AG04449 (cell line): ENCODE measurements at regions of chr12 and their contacts with region 1.

Region 1: DNA sequence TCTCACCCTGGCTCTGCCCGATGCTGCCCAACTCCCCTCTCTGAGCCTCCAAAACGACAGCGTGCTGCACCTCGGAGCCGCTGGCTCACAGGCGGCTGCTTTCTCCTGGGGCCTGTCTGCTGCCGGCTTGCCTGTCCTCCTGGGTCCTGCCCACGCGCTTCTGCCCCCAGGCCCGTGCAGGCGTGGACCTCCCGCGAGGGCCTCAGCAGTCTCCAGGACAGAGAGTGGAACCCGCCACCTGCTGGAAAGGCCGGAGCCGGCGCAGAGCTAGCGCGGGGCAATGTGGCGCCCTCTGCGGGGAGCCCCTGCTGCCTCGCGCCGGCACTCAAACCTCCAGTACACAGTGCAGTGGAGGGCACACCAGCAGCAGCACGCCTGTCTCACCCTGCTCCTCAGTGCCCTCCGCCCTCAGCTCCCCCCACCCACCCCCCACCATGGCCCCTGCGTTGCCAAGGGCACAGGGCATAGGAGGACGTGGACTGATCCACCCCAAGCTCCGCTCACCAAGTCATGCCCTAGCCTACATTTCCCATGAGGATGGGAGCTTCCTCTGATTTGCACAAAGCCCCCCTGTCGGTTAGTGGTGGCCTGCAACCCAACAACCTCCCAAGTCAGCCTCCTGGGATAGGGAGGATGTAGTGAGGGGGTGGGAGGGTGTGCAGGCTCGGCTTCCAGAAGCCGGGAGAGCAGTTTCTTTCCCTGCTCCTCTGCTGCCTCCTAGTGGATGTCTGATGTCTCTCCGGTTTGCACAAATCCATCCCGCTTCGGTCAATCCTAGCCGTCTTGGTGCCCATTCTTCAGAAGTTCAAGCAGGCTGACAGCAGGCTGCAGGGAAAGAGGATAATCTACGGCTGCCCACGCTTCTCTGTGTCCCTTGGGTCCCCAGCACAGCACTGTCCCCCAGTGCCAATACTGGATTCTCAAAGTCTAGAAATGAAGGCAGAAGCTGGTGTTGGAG is 25.2 kb downstream of the KRT8 start:
- DNase-seq: peak; percentile 40
- H3K4me3 ChIP-seq: peak overlapping the region; percentile 41
- CTCF ChIP-seq: peak; percentile 100

Region 2: GRCh38 chr12:52139552-52140062 is 740.1 kb before region 1 on chr12:
- CTCF ChIA-PET with region 1: interaction called, 110 read pairs
- POLR2A ChIA-PET with region 1: no interaction called
- DNase-seq: no peak
- H3K4me3 ChIP-seq: no peak overlapping the region
- CTCF ChIP-seq: peak; percentile 58

Region 3: GRCh38 chr12:52327052-52327829 is 552.4 kb before region 1 on chr12:
- CTCF ChIA-PET with region 1: interaction called, 53 read pairs
- POLR2A ChIA-PET with region 1: no interaction called
- DNase-seq: peak; percentile 55
- H3K4me3 ChIP-seq: no peak overlapping the region
- CTCF ChIP-seq: peak; percentile 98

Region 4: GRCh38 chr12:52390739-52391617 is 488.7 kb before region 1 on chr12:
- CTCF ChIA-PET with region 1: interaction called, 66 read pairs
- POLR2A ChIA-PET with region 1: no interaction called
- DNase-seq: no peak
- H3K4me3 ChIP-seq: no peak overlapping the region
- CTCF ChIP-seq: peak; percentile 73

Region 5: DNA sequence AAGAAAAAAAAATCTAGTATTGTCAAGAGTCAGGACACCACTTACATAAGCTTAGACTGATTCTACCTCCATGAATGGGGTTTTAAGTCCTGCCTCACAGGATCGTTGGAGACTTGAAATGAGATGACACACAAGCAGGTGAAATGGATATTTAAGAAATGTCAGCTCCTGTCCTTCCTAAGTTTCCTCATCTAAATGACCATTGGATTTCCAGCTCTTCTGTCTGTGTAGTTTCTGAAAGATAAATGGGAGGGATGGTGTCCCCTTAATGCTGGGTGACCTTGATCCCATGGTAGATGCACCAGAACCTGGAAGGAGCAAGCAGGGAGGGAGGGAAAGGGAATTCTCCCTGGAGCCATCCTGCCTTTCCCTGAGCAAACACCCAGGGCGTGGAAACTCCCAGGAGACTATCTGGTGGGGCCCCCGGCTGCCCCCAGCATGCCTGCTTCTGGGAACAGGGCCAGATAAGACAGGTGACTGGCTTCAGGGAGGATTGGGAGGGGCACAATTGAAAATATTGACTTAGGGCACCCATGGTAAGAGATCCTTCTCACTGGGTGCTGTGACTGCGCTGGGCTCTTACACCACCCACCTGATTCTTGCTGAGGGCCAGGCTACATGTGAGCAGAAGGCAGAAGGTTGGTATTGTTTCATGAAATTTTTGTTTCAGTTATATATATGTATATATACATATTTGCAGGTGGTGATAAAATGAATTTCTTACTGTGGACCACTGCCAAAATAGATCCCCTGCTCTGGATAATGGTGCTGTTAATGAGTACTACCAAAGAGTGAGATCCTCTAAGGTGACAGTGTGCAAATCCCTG is 15.6 kb after region 1 on chr12:
- CTCF ChIA-PET with region 1: interaction called, 194 read pairs
- POLR2A ChIA-PET with region 1: no interaction called
- DNase-seq: no peak
- H3K4me3 ChIP-seq: no peak overlapping the region
- CTCF ChIP-seq: no peak

Region 6: GRCh38 chr12:52949413-52950331 is 70.0 kb after region 1 on chr12:
- CTCF ChIA-PET with region 1: interaction called, 71 read pairs
- POLR2A ChIA-PET with region 1: no interaction called
- DNase-seq: no peak
- H3K4me3 ChIP-seq: peak overlapping the region; percentile 78
- CTCF ChIP-seq: no peak

Region 7: DNA sequence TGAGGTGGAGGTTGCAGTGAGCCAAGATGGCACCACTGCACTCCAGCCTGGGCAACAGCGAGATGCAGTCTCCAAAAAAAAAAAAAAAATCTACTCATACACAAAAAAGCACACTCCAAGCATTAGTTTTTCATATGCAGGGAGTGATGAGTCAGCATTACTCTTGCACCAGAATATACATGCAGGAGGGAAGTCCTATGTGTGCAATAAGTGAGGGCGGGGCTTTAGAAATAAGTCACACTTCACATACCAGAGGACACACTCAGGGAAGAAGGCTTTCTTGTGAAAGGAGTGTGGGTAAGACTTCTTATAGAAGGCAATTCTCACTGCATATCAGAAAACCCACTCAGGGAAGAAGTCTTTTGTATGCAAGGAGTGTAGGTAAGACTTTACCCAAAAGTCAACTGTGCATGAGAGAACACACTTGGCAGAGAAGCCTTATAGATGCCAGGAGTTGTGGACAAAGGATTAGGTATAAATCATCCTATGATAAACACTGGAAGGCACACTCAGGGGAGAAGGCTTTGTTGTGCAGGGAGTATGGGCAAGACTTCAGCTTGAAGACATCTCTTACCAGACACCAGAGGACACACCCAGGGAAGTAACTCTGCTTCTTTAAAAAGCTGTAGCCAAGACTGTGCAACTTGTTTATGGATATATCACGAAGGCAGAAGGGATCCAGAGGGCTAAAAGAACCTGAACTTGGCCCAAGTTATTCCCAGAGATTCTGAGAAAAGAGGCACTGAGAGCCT is 696.0 kb after region 1 on chr12:
- CTCF ChIA-PET with region 1: no interaction called
- POLR2A ChIA-PET with region 1: no interaction called
- DNase-seq: no peak
- H3K4me3 ChIP-seq: no peak overlapping the region
- CTCF ChIP-seq: no peak